Activated CD4-positive, alpha-beta T cell treated with anti-CD3 and anti-CD28 coated beads for 36 hours (primary cell): ENCODE measurements at regions of chr12 and their contacts with region 1.

Region 1: GRCh38 chr12:104958009-104958945 is at the start of gene SLC41A2:
- DNase-seq: peak; percentile 90
- ATAC-seq: peak; percentile 86
- H3K4me3 Mint-ChIP-seq: peak within 1 kb of the TSS; percentile 82
- H3K27ac Mint-ChIP-seq: peak within 1 kb of the TSS; percentile 92
- H3K4me1 Mint-ChIP-seq: peaks cover 27% of the 10 kb centered on the region
- H3K27me3 Mint-ChIP-seq: peaks cover 21% of the 10 kb centered on the region
- total RNA-seq, gene SLC41A2: 7.9 to 11.1 TPM

Region 2: GRCh38 chr12:104137913-104138796 is 820.1 kb before region 1 on chr12 and contains the start of gene NFYB:
- CTCF ChIA-PET with region 1: no interaction called
- POLR2A ChIA-PET with region 1: no interaction called
- intact Hi-C with region 1: loop called in 1 of 2 experiments (anchors 5 kb)
- DNase-seq: peak; percentile 95
- ATAC-seq: peak; percentile 98
- H3K4me3 Mint-ChIP-seq: peak within 1 kb of the TSS; percentile 83
- H3K27ac Mint-ChIP-seq: peak within 1 kb of the TSS; percentile 90
- H3K4me1 Mint-ChIP-seq: peaks cover 19% of the 10 kb centered on the region
- H3K27me3 Mint-ChIP-seq: no peaks in the 10 kb centered on the region
- total RNA-seq, gene NFYB: 18.8 to 27.2 TPM

Region 3: GRCh38 chr12:104680066-104680465 is 278.2 kb before region 1 on chr12:
- CTCF ChIA-PET with region 1: no interaction called
- POLR2A ChIA-PET with region 1: no interaction called
- intact Hi-C with region 1: loop called in 1 of 2 experiments (anchors 2 kb)
- DNase-seq: peak; percentile 62
- ATAC-seq: peak; percentile 59
- H3K4me3 Mint-ChIP-seq: no peak overlapping the region
- H3K27ac Mint-ChIP-seq: peak overlapping the region; percentile 69
- H3K4me1 Mint-ChIP-seq: peaks cover 51% of the 10 kb centered on the region
- H3K27me3 Mint-ChIP-seq: no peaks in the 10 kb centered on the region

Region 4: GRCh38 chr12:104930388-104931326 is 27.6 kb before region 1 on chr12:
- CTCF ChIA-PET with region 1: interaction called, 7 read pairs
- POLR2A ChIA-PET with region 1: interaction called, 5 read pairs
- intact Hi-C with region 1: loop called (anchors 1 kb)
- DNase-seq: peak; percentile 73
- ATAC-seq: peak; percentile 98
- H3K4me3 Mint-ChIP-seq: peak overlapping the region; percentile 30
- H3K27ac Mint-ChIP-seq: peak overlapping the region; percentile 77
- H3K4me1 Mint-ChIP-seq: peaks cover 29% of the 10 kb centered on the region
- H3K27me3 Mint-ChIP-seq: peaks cover 1% of the 10 kb centered on the region

Region 5: GRCh38 chr12:105030820-105031807 is 72.8 kb after region 1 on chr12:
- CTCF ChIA-PET with region 1: interaction called, 6 read pairs
- POLR2A ChIA-PET with region 1: no interaction called
- intact Hi-C with region 1: loop called in 1 of 2 experiments (anchors 2 kb)
- DNase-seq: no peak
- ATAC-seq: peak; percentile 60
- H3K4me3 Mint-ChIP-seq: no peak overlapping the region
- H3K27ac Mint-ChIP-seq: peak overlapping the region; percentile 40
- H3K4me1 Mint-ChIP-seq: peaks cover 32% of the 10 kb centered on the region
- H3K27me3 Mint-ChIP-seq: no peaks in the 10 kb centered on the region

Region 6: DNA sequence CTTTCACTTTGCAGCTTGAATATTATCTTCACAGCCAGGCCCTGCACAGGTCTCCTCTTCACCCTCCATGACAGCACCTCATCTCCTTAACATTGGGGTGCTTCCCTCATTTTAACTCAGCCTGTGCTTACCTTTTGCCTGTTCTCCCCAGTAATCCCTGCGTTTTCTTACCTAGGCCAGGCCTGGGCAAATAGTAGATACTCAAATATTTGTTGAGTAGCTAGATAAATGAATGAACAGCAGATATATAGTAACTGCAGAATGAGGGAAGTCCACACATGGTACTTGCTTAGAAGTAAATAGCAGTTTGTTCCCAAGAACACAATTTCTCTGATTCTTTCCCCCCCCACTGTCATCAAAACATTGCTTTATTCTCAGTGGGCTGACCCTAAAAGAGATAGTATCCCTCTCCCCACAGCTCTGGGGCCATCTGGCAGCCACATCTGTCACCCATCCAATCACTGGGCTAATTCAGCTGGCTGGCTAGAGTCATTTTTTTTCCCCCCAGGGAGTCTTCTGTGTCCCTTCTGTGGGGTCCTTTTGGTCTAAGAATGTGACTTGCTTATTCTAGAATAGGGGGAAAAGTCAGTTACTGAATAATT is 234.4 kb after region 1 on chr12:
- CTCF ChIA-PET with region 1: no interaction called
- POLR2A ChIA-PET with region 1: no interaction called
- intact Hi-C with region 1: no loop called
- DNase-seq: no peak
- ATAC-seq: no peak
- H3K4me3 Mint-ChIP-seq: no peak overlapping the region
- H3K27ac Mint-ChIP-seq: no peak overlapping the region
- H3K4me1 Mint-ChIP-seq: peaks cover 5% of the 10 kb centered on the region
- H3K27me3 Mint-ChIP-seq: no peaks in the 10 kb centered on the region

Region 7: GRCh38 chr12:105204916-105205315 is 246.6 kb after region 1 on chr12:
- CTCF ChIA-PET with region 1: no interaction called
- POLR2A ChIA-PET with region 1: no interaction called
- intact Hi-C with region 1: no loop called
- DNase-seq: peak; percentile 64
- ATAC-seq: peak; percentile 88
- H3K4me3 Mint-ChIP-seq: no peak overlapping the region
- H3K27ac Mint-ChIP-seq: peak overlapping the region; percentile 72
- H3K4me1 Mint-ChIP-seq: peaks cover 21% of the 10 kb centered on the region
- H3K27me3 Mint-ChIP-seq: no peaks in the 10 kb centered on the region

Region 8: GRCh38 chr12:105235732-105236476 is 277.6 kb after region 1 on chr12 and contains the start of gene APPL2:
- CTCF ChIA-PET with region 1: no interaction called
- POLR2A ChIA-PET with region 1: no interaction called
- intact Hi-C with region 1: loop called in 1 of 2 experiments (anchors 5 kb)
- DNase-seq: peak; percentile 87
- ATAC-seq: peak; percentile 84
- H3K4me3 Mint-ChIP-seq: peak within 1 kb of the TSS; percentile 85
- H3K27ac Mint-ChIP-seq: peak within 1 kb of the TSS; percentile 86
- H3K4me1 Mint-ChIP-seq: peaks cover 41% of the 10 kb centered on the region
- H3K27me3 Mint-ChIP-seq: no peaks in the 10 kb centered on the region
- total RNA-seq, gene APPL2: 13.9 to 17.2 TPM